T-cell (primary cell): ENCODE measurements at regions of chrX and their contacts with region 1.

Region 1: GRCh38 chrX:20680998-20681397 is 414.3 kb upstream of the RPS6KA3 start:
- DNase-seq: no peak
- ATAC-seq: no peak
- H3K4me3 ChIP-seq: no peak overlapping the region
- H3K4me3 Mint-ChIP-seq: no peak overlapping the region
- H3K27ac ChIP-seq: no peak overlapping the region
- H3K27ac Mint-ChIP-seq: no peak overlapping the region
- H3K4me1 ChIP-seq: no peaks in the 10 kb centered on the region
- H3K4me1 Mint-ChIP-seq: no peaks in the 10 kb centered on the region
- H3K27me3 ChIP-seq: no peaks in the 10 kb centered on the region
- H3K27me3 Mint-ChIP-seq: peaks cover 3 to 9% of the 10 kb centered on the region in 2 donors

Region 2: DNA sequence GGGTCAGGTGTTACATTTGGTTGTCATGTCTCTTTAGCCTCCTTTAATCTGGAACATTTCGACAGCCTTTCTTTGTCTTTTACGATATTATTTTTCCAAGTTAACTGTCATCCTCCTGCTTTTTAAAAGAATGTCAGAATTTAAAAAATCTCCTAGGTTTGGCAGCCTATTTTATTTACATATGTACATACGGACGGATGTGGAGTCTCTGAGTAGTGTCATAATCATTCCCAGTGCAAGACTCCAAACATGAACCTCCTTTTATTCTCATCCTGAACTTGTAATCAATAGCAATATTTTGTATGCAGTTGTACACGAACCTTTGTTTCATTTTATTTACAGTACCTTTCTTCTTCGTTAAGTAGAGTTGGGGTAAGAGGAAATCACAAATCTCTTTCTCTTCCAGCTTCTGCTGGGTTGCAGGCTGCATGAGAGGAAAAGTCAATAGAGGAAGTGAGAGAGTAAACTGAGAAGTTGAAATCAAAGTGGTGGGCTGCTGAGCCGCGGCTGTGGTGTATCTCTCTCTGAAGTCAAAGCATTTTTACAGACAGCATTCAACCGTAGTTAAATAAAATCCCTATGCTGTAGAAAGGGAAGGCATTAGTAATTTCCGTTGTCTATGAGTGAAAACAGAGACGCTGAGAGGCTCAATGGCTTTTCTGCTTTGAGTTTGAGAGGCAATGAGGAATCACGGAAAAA is 360.4 kb before region 1 on chrX:
- CTCF ChIA-PET with region 1: no interaction called
- POLR2A ChIA-PET with region 1: interaction called in 1 of 2 experiments, 13 read pairs
- DNase-seq: peak in 29 of 35 experiments; percentile 0 to 45 (median 8)
- ATAC-seq: peak; percentile 69 to 92 (median 80)
- H3K4me3 ChIP-seq: peak overlapping the region in 1 of 2 donors; percentile 7
- H3K4me3 Mint-ChIP-seq: peak overlapping the region; percentile 41 to 62 (median 62)
- H3K27ac ChIP-seq: peak overlapping the region; percentile 39
- H3K27ac Mint-ChIP-seq: peak overlapping the region; percentile 82 to 85
- H3K4me1 ChIP-seq: peaks cover 4 to 8% of the 10 kb centered on the region in 2 experiments
- H3K4me1 Mint-ChIP-seq: peaks cover 20 to 31% (median 29%) of the 10 kb centered on the region in 3 donors
- H3K27me3 ChIP-seq: no peaks in the 10 kb centered on the region
- H3K27me3 Mint-ChIP-seq: peaks cover 0 to 8% of the 10 kb centered on the region in 2 donors

Region 3: GRCh38 chrX:20814074-20814473 is 133.1 kb after region 1 on chrX:
- CTCF ChIA-PET with region 1: no interaction called
- POLR2A ChIA-PET with region 1: no interaction called
- DNase-seq: no peak
- ATAC-seq: no peak
- H3K4me3 ChIP-seq: no peak overlapping the region
- H3K4me3 Mint-ChIP-seq: no peak overlapping the region
- H3K27ac ChIP-seq: no peak overlapping the region
- H3K27ac Mint-ChIP-seq: no peak overlapping the region
- H3K4me1 ChIP-seq: no peaks in the 10 kb centered on the region
- H3K4me1 Mint-ChIP-seq: no peaks in the 10 kb centered on the region
- H3K27me3 ChIP-seq: no peaks in the 10 kb centered on the region
- H3K27me3 Mint-ChIP-seq: peaks cover 5 to 14% of the 10 kb centered on the region in 2 donors